ENCODE measurements at regions of chr5 and their contacts with region 1.

Region 1: DNA sequence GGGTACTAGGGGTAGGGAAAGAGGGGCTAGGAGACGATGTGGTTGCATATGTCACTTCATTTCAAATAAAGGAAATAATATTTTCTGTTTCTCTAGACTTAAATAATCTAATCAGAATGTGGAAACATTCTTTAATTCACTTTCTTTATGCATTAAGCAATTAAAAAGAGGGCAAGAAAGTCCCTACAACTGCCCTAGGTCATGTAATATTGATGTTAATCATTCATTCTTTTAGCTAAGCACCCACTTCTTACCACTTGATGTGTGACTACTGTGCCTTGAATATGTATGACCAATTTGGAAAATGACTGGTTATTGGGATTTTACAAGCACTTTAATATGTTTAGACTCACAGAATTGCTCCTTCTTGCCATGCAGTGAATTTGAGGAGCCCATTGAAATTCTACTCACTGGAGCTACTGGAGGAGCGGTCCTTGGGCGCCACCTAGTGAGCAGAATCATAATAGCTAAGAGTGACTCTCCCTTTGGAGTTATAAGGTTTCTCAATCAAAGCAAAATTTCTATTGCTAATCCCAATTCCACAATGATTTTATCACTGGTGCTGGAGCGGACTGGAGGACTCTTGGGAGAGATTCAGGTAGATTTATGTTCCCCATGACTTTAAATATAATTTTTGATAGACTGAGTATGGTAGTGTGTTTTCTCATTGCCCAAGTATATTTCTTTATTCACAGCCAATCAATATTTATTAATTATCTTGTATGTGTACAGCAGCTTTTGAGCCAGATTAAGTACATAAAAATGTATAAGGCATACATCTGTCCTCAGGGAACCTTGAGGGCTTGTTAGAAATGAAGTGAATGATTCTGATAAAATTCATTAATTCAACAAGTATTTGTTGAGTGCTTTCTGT is 225.1 kb downstream of the ADGRV1 start:
- DNase-seq: peak; percentile 48
- ATAC-seq: peak; percentile 90
- H3K4me3 ChIP-seq: no peak overlapping the region
- H3K27ac ChIP-seq: no peak overlapping the region
- H3K4me1 ChIP-seq: no peaks in the 10 kb centered on the region
- H3K27me3 ChIP-seq: no peaks in the 10 kb centered on the region
- CTCF ChIP-seq: peak; percentile 74 to 95 (median 79)
- POLR2A ChIP-seq: no peak
- RAD21 ChIP-seq: peak; percentile 93

Region 2: GRCh38 chr5:90055831-90056328 is 727.8 kb before region 1 on chr5:
- CTCF ChIA-PET with region 1: no interaction called
- POLR2A ChIA-PET with region 1: no interaction called
- RAD21 ChIA-PET with region 1: no interaction called
- intact Hi-C with region 1: no loop called
- DNase-seq: no peak
- ATAC-seq: no peak
- H3K4me3 ChIP-seq: no peak overlapping the region
- H3K27ac ChIP-seq: no peak overlapping the region
- H3K4me1 ChIP-seq: peaks cover 0 to 11% of the 10 kb centered on the region in 2 experiments; a peak in 2 of 4 replicates
- H3K27me3 ChIP-seq: no peaks in the 10 kb centered on the region
- CTCF ChIP-seq: no peak
- POLR2A ChIP-seq: no peak
- RAD21 ChIP-seq: no peak

Region 3: DNA sequence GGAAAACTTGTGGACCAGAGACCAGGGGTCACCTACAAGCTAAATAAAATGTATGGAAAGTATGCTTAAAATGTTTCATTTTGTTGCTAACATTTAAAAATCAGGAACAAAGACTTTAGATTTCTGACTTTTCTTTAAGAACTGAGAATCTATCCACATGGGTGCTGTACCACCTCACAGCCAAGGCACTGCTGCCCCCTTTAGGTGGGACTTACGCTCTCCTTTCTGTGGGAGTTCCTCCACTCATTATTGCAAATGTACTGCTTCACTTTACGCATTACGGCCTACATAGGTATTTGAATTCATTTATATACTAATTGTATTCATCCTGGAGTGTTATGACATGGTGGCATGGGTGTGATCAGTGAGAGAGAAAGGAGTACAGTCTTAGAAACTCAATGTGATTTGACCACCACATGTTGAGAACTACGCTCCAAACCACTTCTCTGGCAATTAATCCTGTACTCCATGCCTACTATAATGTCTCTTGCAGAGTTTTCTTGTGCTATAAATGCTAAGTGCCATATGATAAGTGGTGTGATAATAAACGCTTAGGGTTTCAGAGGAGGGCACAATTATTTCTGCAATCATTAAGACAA is 349.5 kb before region 1 on chr5:
- CTCF ChIA-PET with region 1: interaction called, 21 read pairs
- POLR2A ChIA-PET with region 1: no interaction called
- RAD21 ChIA-PET with region 1: no interaction called
- intact Hi-C with region 1: loop called (anchors 1 kb)
- DNase-seq: peak; percentile 31
- ATAC-seq: peak; percentile 88
- H3K4me3 ChIP-seq: no peak overlapping the region
- H3K27ac ChIP-seq: no peak overlapping the region
- H3K4me1 ChIP-seq: no peaks in the 10 kb centered on the region
- H3K27me3 ChIP-seq: no peaks in the 10 kb centered on the region
- CTCF ChIP-seq: peak; percentile 37 to 85 (median 81); a peak in 5 of 6 replicates
- POLR2A ChIP-seq: no peak
- RAD21 ChIP-seq: peak; percentile 74

Region 4: DNA sequence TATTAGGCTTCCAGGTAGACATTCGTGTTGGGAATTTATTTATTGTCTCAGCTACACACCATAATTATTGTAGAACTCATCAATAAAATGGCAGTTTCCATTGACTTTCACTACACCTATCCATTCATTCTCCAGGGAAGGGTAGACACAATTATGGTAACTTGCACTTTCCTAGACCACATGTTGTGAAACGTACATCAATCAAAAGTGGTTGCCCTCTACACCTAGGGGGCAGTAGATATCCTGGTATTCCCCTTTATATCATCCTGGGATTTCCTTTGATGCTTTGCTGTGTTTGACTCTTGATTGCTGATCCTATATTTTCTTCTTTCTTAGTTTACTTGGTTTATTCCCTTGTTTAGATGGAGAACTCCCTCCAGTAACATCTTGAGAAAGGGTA is 177.2 kb before region 1 on chr5:
- CTCF ChIA-PET with region 1: interaction called, 17 read pairs
- POLR2A ChIA-PET with region 1: no interaction called
- RAD21 ChIA-PET with region 1: no interaction called
- intact Hi-C with region 1: loop called (anchors 1 kb)
- DNase-seq: peak; percentile 26
- ATAC-seq: peak; percentile 74
- H3K4me3 ChIP-seq: no peak overlapping the region
- H3K27ac ChIP-seq: no peak overlapping the region
- H3K4me1 ChIP-seq: peaks cover 0 to 5% of the 10 kb centered on the region in 2 experiments; a peak in 2 of 4 replicates
- H3K27me3 ChIP-seq: no peaks in the 10 kb centered on the region
- CTCF ChIP-seq: peak; percentile 35 to 70 (median 67); a peak in 5 of 6 replicates
- POLR2A ChIP-seq: no peak
- RAD21 ChIP-seq: peak; percentile 55

Region 5: GRCh38 chr5:90709323-90710155 is 74.2 kb before region 1 on chr5:
- CTCF ChIA-PET with region 1: interaction called, 15 read pairs
- POLR2A ChIA-PET with region 1: no interaction called
- RAD21 ChIA-PET with region 1: interaction called in 1 of 2 experiments, 4 read pairs
- intact Hi-C with region 1: loop called (anchors 1 kb)
- DNase-seq: peak; percentile 40
- ATAC-seq: peak; percentile 95
- H3K4me3 ChIP-seq: no peak overlapping the region
- H3K27ac ChIP-seq: no peak overlapping the region
- H3K4me1 ChIP-seq: no peaks in the 10 kb centered on the region
- H3K27me3 ChIP-seq: no peaks in the 10 kb centered on the region
- CTCF ChIP-seq: peak; percentile 57 to 85 (median 84); a peak in 5 of 6 replicates
- POLR2A ChIP-seq: no peak
- RAD21 ChIP-seq: peak; percentile 66

Region 6: GRCh38 chr5:90802474-90803317 is 19.0 kb after region 1 on chr5:
- CTCF ChIA-PET with region 1: interaction called, 11 read pairs
- POLR2A ChIA-PET with region 1: no interaction called
- RAD21 ChIA-PET with region 1: no interaction called
- intact Hi-C with region 1: no loop called
- DNase-seq: peak; percentile 27
- ATAC-seq: peak; percentile 90
- H3K4me3 ChIP-seq: no peak overlapping the region
- H3K27ac ChIP-seq: no peak overlapping the region
- H3K4me1 ChIP-seq: no peaks in the 10 kb centered on the region
- H3K27me3 ChIP-seq: no peaks in the 10 kb centered on the region
- CTCF ChIP-seq: peak; percentile 42 to 85 (median 68); a peak in 5 of 6 replicates
- POLR2A ChIP-seq: no peak
- RAD21 ChIP-seq: peak; percentile 54; the same call in 1 of the 2 replicates